ENCODE measurements at regions of chr2 and their contacts with region 1.

Region 1: GRCh38 chr2:215505044-215505786 is 69.3 kb upstream of the FN1 start:
- DNase-seq: peak; percentile 29 to 82 (median 61)
- ATAC-seq: peak; percentile 92
- H3K4me3 ChIP-seq: no peak overlapping the region
- H3K27ac ChIP-seq: peak overlapping the region; percentile 39; the same call in 2 of the 3 replicates
- H3K4me1 ChIP-seq: peaks cover 11 to 19% of the 10 kb centered on the region in 2 experiments; a peak in 4 of 5 replicates
- H3K27me3 ChIP-seq: no peaks in the 10 kb centered on the region
- CTCF ChIP-seq: no peak
- EP300 ChIP-seq: peak; percentile 92
- POLR2A ChIP-seq: no peak
- RAD21 ChIP-seq: no peak

Region 2: GRCh38 chr2:215619022-215619958 is 114.1 kb after region 1 on chr2:
- CTCF ChIA-PET with region 1: no interaction called
- POLR2A ChIA-PET with region 1: no interaction called
- in situ Hi-C with region 1: no loop called
- intact Hi-C with region 1: loop called (anchors 10 kb)
- DNase-seq: peak; percentile 70 to 85 (median 74)
- ATAC-seq: peak; percentile 86
- H3K4me3 ChIP-seq: no peak overlapping the region; the same call in 1 of the 2 replicates
- H3K27ac ChIP-seq: peak overlapping the region; percentile 81
- H3K4me1 ChIP-seq: peaks cover 3 to 21% of the 10 kb centered on the region in 2 experiments; a peak in 4 of 5 replicates
- H3K27me3 ChIP-seq: no peaks in the 10 kb centered on the region
- CTCF ChIP-seq: no peak
- EP300 ChIP-seq: peak; percentile 96
- POLR2A ChIP-seq: no peak
- RAD21 ChIP-seq: peak; percentile 7 to 35; a peak in 2 of 4 replicates

Measured in K562 (cell line).